BJ (cell line): ENCODE measurements at regions of chr13 and their contacts with region 1.

Region 1: GRCh38 chr13:73059460-73060201 is 826 bp downstream of the KLF5 start:
- DNase-seq: no peak
- H3K4me3 ChIP-seq: peak overlapping the region; percentile 93
- H3K27me3 ChIP-seq: no peaks in the 10 kb centered on the region
- CTCF ChIP-seq: no peak

Region 2: DNA sequence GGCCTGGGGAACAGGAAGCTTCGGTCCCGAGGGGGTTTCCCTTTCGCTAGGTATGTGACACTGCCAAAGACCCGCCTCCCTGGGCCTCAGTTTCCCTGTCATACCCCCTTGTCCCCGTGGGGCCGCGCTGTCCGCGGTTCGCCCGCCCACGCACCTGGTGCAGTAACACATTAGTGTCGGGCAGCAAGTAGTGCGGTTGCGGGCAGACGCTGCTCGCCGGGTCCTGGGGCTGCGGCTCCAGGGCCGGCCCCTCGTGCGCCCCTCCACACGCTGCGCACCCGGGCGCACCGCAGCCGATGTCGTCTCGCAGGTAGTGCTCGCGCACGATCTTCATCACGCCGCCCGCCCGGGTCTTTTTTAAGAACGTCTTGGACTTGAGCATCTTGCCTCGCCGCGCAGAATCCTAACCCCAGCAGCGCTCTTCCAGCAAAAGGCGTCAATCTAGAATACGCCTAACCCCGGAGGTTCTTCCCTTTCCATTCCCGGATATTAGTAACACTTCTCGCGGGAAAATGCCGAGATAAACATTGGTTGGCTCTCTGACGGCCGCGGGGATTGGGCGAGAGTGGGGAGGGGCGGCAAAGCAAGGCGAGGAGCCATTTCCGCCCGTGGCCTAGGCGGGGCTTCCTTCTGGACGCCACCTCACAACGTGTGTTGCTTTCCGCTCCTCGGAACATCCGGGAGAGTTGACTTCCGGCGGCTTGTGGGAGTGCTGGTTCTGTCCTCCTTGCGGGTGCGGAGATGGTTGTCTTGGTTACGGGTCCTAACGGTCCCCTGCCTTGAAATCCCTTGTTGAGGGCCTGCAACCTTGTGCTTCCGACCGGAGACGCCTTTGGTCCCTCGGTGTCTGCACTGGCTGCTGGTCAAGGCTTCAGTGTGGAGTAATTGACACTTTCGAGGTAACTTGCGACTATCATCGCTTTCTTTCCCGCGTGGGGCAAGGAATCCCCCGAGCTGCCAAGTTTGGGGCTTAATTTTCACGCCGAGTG is 277.9 kb before region 1 on chr13 and contains the starts of genes DIS3 and PIBF1:
- CTCF ChIA-PET with region 1: no interaction called
- POLR2A ChIA-PET with region 1: interaction called, 10 read pairs
- DNase-seq: peak; percentile 94
- H3K4me3 ChIP-seq: peak within 1 kb of the TSS; percentile 99
- H3K27me3 ChIP-seq: no peaks in the 10 kb centered on the region
- CTCF ChIP-seq: peak; percentile 23; the same call in 1 of the 2 replicates
- polyA plus RNA-seq, gene DIS3: 15.8 and 23.4 TPM in 2 replicates
- polyA plus RNA-seq, gene PIBF1: 1.7 and 4.1 TPM in 2 replicates